Astrocyte of the cerebellum (primary cell): ENCODE measurements at regions of chr1 and their contacts with region 1.

Region 1: GRCh38 chr1:225474986-225475820 is 47.4 kb upstream of the LBR start:
- DNase-seq: peak; percentile 28
- H3K4me3 ChIP-seq: no peak overlapping the region
- CTCF ChIP-seq: peak; percentile 100

Region 2: GRCh38 chr1:225361176-225361575 is 114.0 kb before region 1 on chr1:
- in situ Hi-C with region 1: no loop called
- DNase-seq: no peak
- H3K4me3 ChIP-seq: no peak overlapping the region
- CTCF ChIP-seq: no peak

Region 3: GRCh38 chr1:225519166-225519863 is 44.1 kb after region 1 on chr1:
- in situ Hi-C with region 1: no loop called
- DNase-seq: no peak
- H3K4me3 ChIP-seq: no peak overlapping the region
- CTCF ChIP-seq: no peak

Region 4: GRCh38 chr1:225999227-225999911 is 524.2 kb after region 1 on chr1 and contains the start of gene SDE2:
- in situ Hi-C with region 1: loop called (anchors 25 kb)
- DNase-seq: peak; percentile 96
- H3K4me3 ChIP-seq: peak within 1 kb of the TSS; percentile 94
- CTCF ChIP-seq: no peak